AG04450 (cell line): ENCODE measurements at regions of chr18 and their contacts with region 1.

Region 1: GRCh38 chr18:59308248-59308937 is 10.1 kb downstream of the CPLX4 start:
- DNase-seq: peak; percentile 4
- H3K4me3 ChIP-seq: peak overlapping the region; percentile 45
- H3K27ac ChIP-seq: no peak overlapping the region
- H3K27me3 ChIP-seq: peaks cover 54% of the 10 kb centered on the region
- CTCF ChIP-seq: peak; percentile 86

Region 2: GRCh38 chr18:59177485-59177884 is 130.9 kb before region 1 on chr18:
- CTCF ChIA-PET with region 1: interaction called, 12 read pairs
- POLR2A ChIA-PET with region 1: no interaction called
- DNase-seq: no peak
- H3K4me3 ChIP-seq: no peak overlapping the region
- H3K27ac ChIP-seq: no peak overlapping the region
- H3K27me3 ChIP-seq: peaks cover 9% of the 10 kb centered on the region
- CTCF ChIP-seq: no peak

Region 3: GRCh38 chr18:59318460-59319050 is 10.2 kb after region 1 on chr18 and contains the start of gene CPLX4:
- CTCF ChIA-PET with region 1: interaction called, 52 read pairs
- POLR2A ChIA-PET with region 1: interaction called, 7 read pairs
- DNase-seq: no peak
- H3K4me3 ChIP-seq: no peak within 1 kb of the TSS
- H3K27ac ChIP-seq: no peak within 1 kb of the TSS
- H3K27me3 ChIP-seq: peaks cover 18% of the 10 kb centered on the region
- CTCF ChIP-seq: no peak
- polyA plus RNA-seq, gene CPLX4: not detected in 2 replicates

Region 4: GRCh38 chr18:59358712-59359575 is 50.6 kb after region 1 on chr18 and contains the start of gene LMAN1:
- CTCF ChIA-PET with region 1: interaction called, 8 read pairs
- POLR2A ChIA-PET with region 1: interaction called, 11 read pairs
- DNase-seq: peak; percentile 84
- H3K4me3 ChIP-seq: peak within 1 kb of the TSS; percentile 97
- H3K27ac ChIP-seq: peak within 1 kb of the TSS; percentile 95
- H3K27me3 ChIP-seq: peaks cover 8% of the 10 kb centered on the region
- CTCF ChIP-seq: no peak
- polyA plus RNA-seq, gene LMAN1: 110 and 159 TPM in 2 replicates

Region 5: GRCh38 chr18:59387687-59388565 is 79.5 kb after region 1 on chr18:
- CTCF ChIA-PET with region 1: interaction called, 15 read pairs
- POLR2A ChIA-PET with region 1: no interaction called
- DNase-seq: no peak
- H3K4me3 ChIP-seq: no peak overlapping the region
- H3K27ac ChIP-seq: no peak overlapping the region
- H3K27me3 ChIP-seq: peaks cover 4% of the 10 kb centered on the region
- CTCF ChIP-seq: no peak

Region 6: DNA sequence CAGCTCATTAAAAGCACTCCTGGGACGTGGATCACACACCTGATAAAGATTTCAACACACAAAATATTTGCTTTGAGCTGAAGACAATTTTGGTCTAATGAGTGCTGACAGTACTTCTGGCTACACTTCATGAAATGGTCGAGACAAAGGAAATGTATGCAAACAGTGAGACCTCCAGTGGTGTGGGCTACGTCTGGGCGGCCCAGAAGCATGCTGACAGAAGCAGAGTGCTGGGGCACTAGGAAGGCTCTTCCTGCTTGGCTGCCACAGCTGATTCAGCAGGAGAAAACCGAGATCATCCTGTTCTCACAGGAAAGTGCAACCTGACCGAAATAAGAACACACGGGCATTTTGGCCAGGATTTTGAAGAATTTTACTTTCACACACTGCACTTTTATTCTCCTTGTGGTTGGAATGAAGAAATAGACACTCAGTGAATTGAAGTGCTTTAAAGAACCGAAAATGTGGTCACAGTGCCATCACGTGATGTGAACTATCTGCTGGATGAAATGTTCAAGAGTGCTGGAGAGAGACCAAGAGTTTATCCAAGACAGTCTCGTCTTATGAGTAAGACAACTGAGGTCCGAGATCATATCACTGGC is 239.3 kb after region 1 on chr18:
- CTCF ChIA-PET with region 1: no interaction called
- POLR2A ChIA-PET with region 1: no interaction called
- DNase-seq: peak; percentile 74
- H3K4me3 ChIP-seq: no peak overlapping the region; the same call in 1 of the 2 replicates
- H3K27ac ChIP-seq: peak overlapping the region; percentile 33
- H3K27me3 ChIP-seq: no peaks in the 10 kb centered on the region
- CTCF ChIP-seq: peak; percentile 41; the same call in 1 of the 2 replicates

Region 7: GRCh38 chr18:60623331-60623730 is 1314.9 kb after region 1 on chr18:
- CTCF ChIA-PET with region 1: interaction called, 10 read pairs
- POLR2A ChIA-PET with region 1: no interaction called
- DNase-seq: no peak
- H3K4me3 ChIP-seq: no peak overlapping the region
- H3K27ac ChIP-seq: no peak overlapping the region
- H3K27me3 ChIP-seq: no peaks in the 10 kb centered on the region
- CTCF ChIP-seq: no peak

Region 8: DNA sequence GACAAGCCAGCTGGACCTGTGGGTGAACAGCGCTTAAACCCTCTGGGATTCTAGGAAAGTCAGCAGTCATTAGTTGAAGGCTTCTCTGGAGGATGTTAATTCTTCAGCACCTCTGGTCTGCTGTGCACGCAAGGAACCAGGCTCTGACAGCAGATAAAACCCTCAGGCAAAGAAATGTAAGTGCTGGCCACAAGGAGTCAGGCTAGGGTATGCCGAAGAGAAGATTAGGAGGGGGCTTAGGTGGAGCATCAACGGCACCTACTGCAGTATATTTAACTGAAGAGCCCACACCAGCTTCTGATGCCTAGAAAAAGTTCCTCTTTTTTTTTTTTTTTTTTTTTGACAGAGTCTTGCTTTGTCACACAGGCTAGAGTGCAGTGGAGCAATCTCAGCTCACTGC is 1368.4 kb after region 1 on chr18:
- CTCF ChIA-PET with region 1: no interaction called
- POLR2A ChIA-PET with region 1: no interaction called
- DNase-seq: no peak
- H3K4me3 ChIP-seq: no peak overlapping the region
- H3K27ac ChIP-seq: no peak overlapping the region
- H3K27me3 ChIP-seq: no peaks in the 10 kb centered on the region
- CTCF ChIP-seq: no peak